Naive thymus-derived CD4-positive, alpha-beta T cell (primary cell): ENCODE measurements at regions of chr5 and their contacts with region 1.

Region 1: GRCh38 chr5:135887351-135887864 is 8.2 kb downstream of the IL9 start:
- DNase-seq: peak; percentile 14 to 57 (median 42)
- ATAC-seq: peak; percentile 86
- H3K4me3 ChIP-seq: no peak overlapping the region
- H3K4me3 Mint-ChIP-seq: peak overlapping the region in 7 of 10 donors; percentile 31 to 64 (median 39)
- H3K27ac ChIP-seq: no peak overlapping the region
- H3K27ac Mint-ChIP-seq: no peak overlapping the region
- H3K4me1 ChIP-seq: no peaks in the 10 kb centered on the region
- H3K4me1 Mint-ChIP-seq: peaks cover 0 to 9% (median 7%) of the 10 kb centered on the region in 7 donors
- H3K27me3 ChIP-seq: no peaks in the 10 kb centered on the region
- H3K27me3 Mint-ChIP-seq: peaks cover 7 to 21% (median 15%) of the 10 kb centered on the region in 5 donors

Region 2: DNA sequence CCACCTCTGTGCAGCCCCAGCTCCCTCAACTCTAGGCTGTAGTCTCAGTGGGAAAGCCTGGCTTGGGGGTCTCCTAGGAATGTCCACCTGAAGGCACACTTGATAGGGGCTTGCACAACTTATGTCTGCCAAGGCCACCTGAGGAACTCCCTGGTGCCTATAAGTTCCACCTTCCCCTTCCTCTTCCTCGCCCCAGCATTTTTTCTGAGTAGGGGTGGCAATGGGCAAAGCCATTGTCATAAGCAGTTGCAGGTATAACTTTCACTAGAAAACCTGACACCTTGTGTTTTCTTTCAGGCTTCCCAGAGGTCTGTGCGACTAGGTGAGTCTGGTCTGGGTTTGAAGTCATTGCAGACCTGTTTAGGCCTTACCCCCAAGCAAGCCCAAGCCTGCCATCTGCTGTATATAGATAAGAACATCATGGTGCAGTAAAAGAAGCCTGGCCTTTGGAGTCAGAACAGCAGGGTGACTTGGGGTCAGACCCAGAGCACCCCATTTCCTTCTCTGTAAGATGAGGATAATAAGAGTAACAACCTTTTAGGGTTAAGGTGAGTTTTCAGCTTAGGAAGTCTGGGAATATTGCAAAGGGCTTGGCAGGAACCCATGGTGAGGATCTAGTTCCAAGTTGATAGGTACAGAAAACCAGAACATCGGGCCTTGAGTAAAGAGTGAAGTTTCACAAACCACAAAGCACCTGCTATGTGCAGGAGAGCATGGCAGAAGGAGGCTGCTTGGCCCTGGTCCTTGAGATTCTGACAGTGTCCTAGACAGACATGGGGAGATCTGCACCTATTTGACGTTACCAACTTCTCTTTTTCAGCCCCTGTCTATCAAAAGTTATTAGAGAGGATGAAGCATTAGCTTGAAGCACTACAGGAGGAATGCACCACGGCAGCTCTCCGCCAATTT is 175.2 kb after region 1 on chr5:
- CTCF ChIA-PET with region 1: no interaction called
- POLR2A ChIA-PET with region 1: no interaction called
- intact Hi-C with region 1: loop called in 1 of 2 experiments (anchors 5 kb)
- DNase-seq: no peak
- ATAC-seq: peak; percentile 55
- H3K4me3 ChIP-seq: no peak overlapping the region
- H3K4me3 Mint-ChIP-seq: no peak overlapping the region
- H3K27ac ChIP-seq: no peak overlapping the region
- H3K27ac Mint-ChIP-seq: no peak overlapping the region
- H3K4me1 ChIP-seq: no peaks in the 10 kb centered on the region
- H3K4me1 Mint-ChIP-seq: peaks cover 0 to 2% (median 0%) of the 10 kb centered on the region in 7 donors
- H3K27me3 ChIP-seq: no peaks in the 10 kb centered on the region
- H3K27me3 Mint-ChIP-seq: peaks cover 0 to 5% (median 0%) of the 10 kb centered on the region in 5 donors

Region 3: GRCh38 chr5:136174021-136174659 is 286.7 kb after region 1 on chr5:
- CTCF ChIA-PET with region 1: no interaction called
- POLR2A ChIA-PET with region 1: no interaction called
- intact Hi-C with region 1: loop called in 1 of 2 experiments (anchors 1 kb)
- DNase-seq: peak in 1 of 9 donors; percentile 5
- ATAC-seq: no peak
- H3K4me3 ChIP-seq: no peak overlapping the region
- H3K4me3 Mint-ChIP-seq: no peak overlapping the region
- H3K27ac ChIP-seq: no peak overlapping the region
- H3K27ac Mint-ChIP-seq: no peak overlapping the region
- H3K4me1 ChIP-seq: no peaks in the 10 kb centered on the region
- H3K4me1 Mint-ChIP-seq: peaks cover 0 to 1% (median 0%) of the 10 kb centered on the region in 7 donors
- H3K27me3 ChIP-seq: no peaks in the 10 kb centered on the region
- H3K27me3 Mint-ChIP-seq: no peaks in the 10 kb centered on the region

Region 4: GRCh38 chr5:136212252-136212721 is 324.9 kb after region 1 on chr5:
- CTCF ChIA-PET with region 1: no interaction called
- POLR2A ChIA-PET with region 1: no interaction called
- intact Hi-C with region 1: loop called in 1 of 2 experiments (anchors 1 kb)
- DNase-seq: peak in 5 of 9 donors; percentile 5 to 47 (median 17)
- ATAC-seq: no peak
- H3K4me3 ChIP-seq: no peak overlapping the region
- H3K4me3 Mint-ChIP-seq: no peak overlapping the region
- H3K27ac ChIP-seq: no peak overlapping the region
- H3K27ac Mint-ChIP-seq: no peak overlapping the region
- H3K4me1 ChIP-seq: no peaks in the 10 kb centered on the region
- H3K4me1 Mint-ChIP-seq: no peaks in the 10 kb centered on the region
- H3K27me3 ChIP-seq: no peaks in the 10 kb centered on the region
- H3K27me3 Mint-ChIP-seq: peaks cover 2 to 35% (median 18%) of the 10 kb centered on the region in 5 donors

Region 5: DNA sequence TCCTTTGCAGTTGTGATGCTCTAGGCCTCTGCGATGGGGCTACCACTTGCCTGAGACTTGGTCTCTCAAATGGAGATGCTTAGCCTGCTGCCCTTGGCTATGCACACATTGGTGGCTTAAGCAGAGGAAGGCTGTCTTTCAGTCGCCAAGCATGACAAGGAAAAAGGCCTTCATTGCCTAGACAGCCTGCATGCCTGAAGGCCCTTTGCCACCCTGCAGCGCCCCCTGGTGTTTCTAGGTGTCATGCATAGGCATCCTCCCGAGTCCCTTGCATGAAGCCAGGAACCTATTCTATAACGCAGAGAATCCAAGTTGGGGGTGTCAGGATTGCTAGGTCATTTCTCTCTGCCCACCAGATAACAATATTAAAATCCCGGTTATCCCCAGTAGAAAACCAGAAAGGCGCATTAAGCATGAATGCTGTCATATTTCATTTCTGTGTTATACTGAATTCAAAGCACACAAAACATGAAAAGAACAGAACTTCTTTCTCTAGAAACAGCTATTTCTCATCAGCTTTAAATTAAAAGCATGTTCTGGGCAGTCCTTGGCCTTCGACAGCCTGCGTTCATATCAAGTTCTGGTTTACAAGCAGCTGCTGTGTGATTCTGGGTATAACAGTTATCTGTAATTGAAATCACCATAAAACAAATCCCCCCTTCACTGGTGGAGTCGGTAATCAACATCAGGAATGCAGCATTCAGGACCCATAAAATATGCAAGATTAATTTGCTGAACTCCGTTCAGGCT is 537.6 kb after region 1 on chr5:
- CTCF ChIA-PET with region 1: no interaction called
- POLR2A ChIA-PET with region 1: no interaction called
- intact Hi-C with region 1: loop called in 1 of 2 experiments (anchors 10 kb)
- DNase-seq: peak in 1 of 9 donors; percentile 56
- ATAC-seq: no peak
- H3K4me3 ChIP-seq: no peak overlapping the region
- H3K4me3 Mint-ChIP-seq: no peak overlapping the region
- H3K27ac ChIP-seq: no peak overlapping the region
- H3K27ac Mint-ChIP-seq: no peak overlapping the region
- H3K4me1 ChIP-seq: no peaks in the 10 kb centered on the region
- H3K4me1 Mint-ChIP-seq: no peaks in the 10 kb centered on the region
- H3K27me3 ChIP-seq: no peaks in the 10 kb centered on the region
- H3K27me3 Mint-ChIP-seq: peaks cover 0 to 4% (median 0%) of the 10 kb centered on the region in 5 donors